Activated B cell treated with CpG ODN at 0.5 μM for 24 hours (primary cell): ENCODE measurements at regions of chr2 and their contacts with region 1.

Region 1: DNA sequence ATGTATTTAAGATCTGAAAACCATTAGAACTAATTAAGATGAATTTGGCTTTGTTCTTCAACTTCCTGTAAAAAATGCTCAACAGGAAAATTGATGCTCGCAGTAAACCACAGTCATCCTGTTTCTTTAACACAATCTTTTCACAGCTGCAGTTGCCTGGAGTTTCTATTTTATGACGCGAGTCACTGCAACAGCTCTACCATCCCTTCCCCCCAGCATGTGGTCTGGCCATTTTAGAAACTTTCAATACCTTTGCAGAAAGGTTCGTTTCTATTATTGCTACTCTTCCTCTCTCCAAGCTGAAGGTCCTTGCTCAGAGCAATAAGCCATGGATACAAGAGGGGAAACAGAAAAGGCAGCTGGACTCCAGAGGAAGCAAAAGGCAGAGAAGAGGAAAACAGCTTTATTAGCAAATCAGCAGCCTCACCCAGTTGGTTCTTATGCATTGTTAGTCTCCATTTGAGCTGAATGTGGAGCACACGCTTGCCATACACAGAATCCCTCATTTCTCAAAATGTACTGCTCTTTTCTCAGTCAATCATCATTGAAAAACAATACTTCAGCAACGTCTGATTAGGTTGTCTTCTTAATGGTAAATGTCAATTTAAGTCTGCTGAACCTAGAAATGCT is 3.9 kb downstream of the WIPF1 start:
- DNase-seq: no peak
- ATAC-seq: peak; percentile 65
- H3K4me3 Mint-ChIP-seq: peak overlapping the region; percentile 98
- H3K27ac Mint-ChIP-seq: peak overlapping the region; percentile 99
- H3K4me1 Mint-ChIP-seq: peaks cover 78% of the 10 kb centered on the region
- H3K27me3 Mint-ChIP-seq: no peaks in the 10 kb centered on the region
- CTCF ChIP-seq: no peak

Region 2: GRCh38 chr2:174492963-174493431 is 100.7 kb before region 1 on chr2:
- CTCF ChIA-PET with region 1: no interaction called
- POLR2A ChIA-PET with region 1: interaction called, 13 read pairs
- intact Hi-C with region 1: no loop called
- DNase-seq: peak; percentile 29
- ATAC-seq: peak; percentile 93
- H3K4me3 Mint-ChIP-seq: peak overlapping the region; percentile 73
- H3K27ac Mint-ChIP-seq: peak overlapping the region; percentile 97
- H3K4me1 Mint-ChIP-seq: peaks cover 48% of the 10 kb centered on the region
- H3K27me3 Mint-ChIP-seq: no peaks in the 10 kb centered on the region
- CTCF ChIP-seq: no peak

Region 3: GRCh38 chr2:174553811-174554493 is 39.7 kb before region 1 on chr2:
- CTCF ChIA-PET with region 1: no interaction called
- POLR2A ChIA-PET with region 1: interaction called, 14 read pairs
- intact Hi-C with region 1: no loop called
- DNase-seq: no peak
- ATAC-seq: peak; percentile 87
- H3K4me3 Mint-ChIP-seq: peak overlapping the region; percentile 40
- H3K27ac Mint-ChIP-seq: peak overlapping the region; percentile 88
- H3K4me1 Mint-ChIP-seq: peaks cover 33% of the 10 kb centered on the region
- H3K27me3 Mint-ChIP-seq: no peaks in the 10 kb centered on the region
- CTCF ChIP-seq: no peak

Region 4: DNA sequence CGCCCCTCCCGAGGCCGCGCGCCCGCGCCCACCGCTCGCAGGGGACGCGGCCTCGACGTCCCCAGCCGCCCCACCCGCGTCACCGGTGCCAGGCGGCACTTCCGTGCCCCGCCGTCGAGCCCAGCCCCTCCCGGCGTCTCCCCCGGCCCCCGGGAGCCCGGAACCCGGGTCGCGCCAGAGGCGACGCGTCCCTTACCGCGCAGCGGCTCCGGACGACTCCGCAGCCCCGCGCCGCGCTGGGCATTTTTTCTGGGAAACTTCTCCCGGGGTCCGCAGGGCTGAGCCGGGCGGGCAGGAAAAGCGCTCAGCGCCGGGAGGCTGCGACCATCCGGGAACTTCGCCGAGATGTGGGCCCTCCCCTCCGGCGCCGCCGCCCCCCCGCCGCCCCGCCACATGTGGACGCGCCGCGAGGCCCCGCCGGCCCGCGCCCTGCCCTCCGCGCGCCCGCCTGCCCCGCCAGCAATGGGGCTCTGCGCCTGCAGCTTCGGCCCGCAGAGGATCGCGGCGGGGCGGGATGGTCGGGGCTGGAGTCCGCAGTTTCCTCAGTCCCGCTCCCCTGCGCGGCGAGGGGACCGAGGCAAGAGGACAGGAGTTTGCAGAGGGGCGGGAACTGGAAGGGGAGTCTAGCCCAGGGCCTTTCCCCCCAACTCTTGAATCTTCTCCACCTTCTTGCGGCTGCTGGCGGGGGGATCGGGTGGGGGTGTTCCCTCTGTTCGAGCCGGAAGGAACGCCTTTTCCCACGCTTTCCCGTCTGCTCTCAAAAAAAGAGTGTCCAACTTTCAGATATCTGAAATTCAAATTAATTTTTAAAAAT is 89.1 kb after region 1 on chr2:
- CTCF ChIA-PET with region 1: interaction called, 16 read pairs
- POLR2A ChIA-PET with region 1: interaction called, 20 read pairs
- intact Hi-C with region 1: no loop called
- DNase-seq: peak; percentile 63
- ATAC-seq: peak; percentile 74
- H3K4me3 Mint-ChIP-seq: peak overlapping the region; percentile 90
- H3K27ac Mint-ChIP-seq: peak overlapping the region; percentile 83
- H3K4me1 Mint-ChIP-seq: peaks cover 16% of the 10 kb centered on the region
- H3K27me3 Mint-ChIP-seq: no peaks in the 10 kb centered on the region
- CTCF ChIP-seq: no peak

Region 5: DNA sequence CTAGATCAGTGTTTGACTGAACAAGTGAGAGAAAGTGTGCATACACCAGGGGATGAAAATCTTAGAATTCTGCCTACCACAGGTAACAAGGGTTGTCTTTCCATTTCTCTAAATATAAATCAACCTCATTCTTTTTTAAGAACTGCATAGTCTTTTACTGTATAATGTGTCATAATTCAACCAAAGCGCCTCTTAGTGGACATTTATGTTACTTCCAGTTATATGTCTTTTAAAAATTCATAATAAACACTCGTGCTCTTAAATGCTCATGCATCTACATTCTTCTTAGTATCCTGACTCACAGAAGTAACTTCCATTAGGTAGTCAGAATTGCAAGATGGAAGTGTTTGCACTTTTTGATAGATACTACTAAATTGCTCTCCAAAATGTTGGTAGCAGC is 94.4 kb after region 1 on chr2:
- CTCF ChIA-PET with region 1: interaction called, 16 read pairs
- POLR2A ChIA-PET with region 1: interaction called, 20 read pairs
- intact Hi-C with region 1: no loop called
- DNase-seq: no peak
- ATAC-seq: peak; percentile 41
- H3K4me3 Mint-ChIP-seq: no peak overlapping the region
- H3K27ac Mint-ChIP-seq: no peak overlapping the region
- H3K4me1 Mint-ChIP-seq: peaks cover 11% of the 10 kb centered on the region
- H3K27me3 Mint-ChIP-seq: peaks cover 3% of the 10 kb centered on the region
- CTCF ChIP-seq: peak; percentile 55

Region 6: GRCh38 chr2:174878537-174879147 is 285.0 kb after region 1 on chr2:
- CTCF ChIA-PET with region 1: no interaction called
- POLR2A ChIA-PET with region 1: no interaction called
- intact Hi-C with region 1: no loop called
- DNase-seq: no peak
- ATAC-seq: no peak
- H3K4me3 Mint-ChIP-seq: no peak overlapping the region
- H3K27ac Mint-ChIP-seq: no peak overlapping the region
- H3K4me1 Mint-ChIP-seq: no peaks in the 10 kb centered on the region
- H3K27me3 Mint-ChIP-seq: no peaks in the 10 kb centered on the region
- CTCF ChIP-seq: no peak